Calu3 (cell line): ENCODE measurements at regions of chr10 and their contacts with region 1.

Region 1: DNA sequence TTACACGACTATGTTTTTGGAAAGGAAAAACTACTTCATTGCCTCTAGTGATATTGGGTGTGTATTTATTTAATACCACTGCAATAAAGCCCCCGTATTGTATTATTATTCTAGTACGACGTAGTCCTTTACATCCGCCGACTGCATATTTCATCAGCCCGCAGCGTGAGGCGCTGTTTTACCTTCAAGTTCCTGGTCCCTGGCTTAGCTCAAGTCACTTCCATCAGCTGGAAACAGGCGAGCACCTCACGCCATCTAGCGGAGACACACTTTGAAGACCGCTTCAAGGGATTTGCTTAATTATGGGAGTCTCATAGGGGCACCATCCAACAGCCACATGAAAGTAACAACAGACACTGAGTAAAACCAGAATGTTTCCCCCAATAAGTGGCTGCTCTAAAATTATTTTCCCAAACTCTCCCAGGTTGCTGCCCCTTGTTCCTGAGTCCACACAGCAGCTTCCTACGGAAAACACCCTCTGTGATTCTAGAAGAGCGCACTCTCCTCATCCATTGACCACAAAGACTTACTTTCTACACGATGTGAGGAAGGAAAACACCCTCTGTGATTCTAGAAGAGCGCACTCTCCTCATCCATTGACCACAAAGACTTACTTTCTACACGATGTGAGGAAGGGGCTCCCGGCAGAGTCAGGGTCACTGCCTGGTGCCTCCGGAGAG is 15.7 kb upstream of the ITIH2 start:
- DNase-seq: peak; percentile 85
- H3K4me3 Mint-ChIP-seq: peak overlapping the region; percentile 50
- H3K27ac Mint-ChIP-seq: peak overlapping the region; percentile 80
- H3K4me1 Mint-ChIP-seq: peaks cover 27% of the 10 kb centered on the region
- H3K27me3 Mint-ChIP-seq: no peaks in the 10 kb centered on the region
- CTCF ChIP-seq: peak; percentile 87

Region 2: DNA sequence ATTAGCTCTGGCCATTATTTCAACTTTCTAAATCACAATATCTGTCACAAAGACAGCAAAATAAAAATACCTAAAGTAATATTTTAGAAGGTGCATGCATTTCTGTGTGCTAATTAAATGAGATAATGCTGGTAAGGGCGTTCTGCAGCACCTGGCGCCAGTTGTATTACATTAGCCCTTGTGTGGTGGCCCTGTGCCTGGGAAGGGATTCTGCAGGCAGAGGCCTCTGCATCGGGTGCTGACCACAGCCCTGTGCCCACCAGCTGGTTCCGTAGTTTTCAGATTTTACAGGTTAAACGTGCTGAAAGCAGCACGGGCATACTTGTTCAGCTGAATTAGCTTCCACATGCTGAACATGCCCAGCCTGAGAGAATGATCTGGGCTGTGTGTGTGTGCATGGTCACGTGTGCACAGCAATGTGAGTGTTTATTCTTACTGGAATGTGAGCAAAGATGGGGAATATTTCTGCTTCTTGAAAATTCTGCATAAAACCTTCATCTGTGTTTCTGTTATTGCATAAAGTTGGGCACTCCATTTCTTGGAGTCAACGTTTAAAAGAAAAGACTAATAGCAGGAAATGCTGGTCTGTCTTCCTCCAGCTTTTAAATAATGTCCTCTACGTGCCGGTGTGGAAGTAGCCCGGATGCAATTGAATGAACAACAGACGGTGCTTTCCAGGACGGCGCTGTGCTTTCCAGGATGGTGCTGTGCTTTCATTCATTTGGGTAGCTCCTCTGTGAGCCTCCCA is 949.4 kb before region 1 on chr10:
- CTCF ChIA-PET with region 1: no interaction called
- intact Hi-C with region 1: loop called (anchors 5 kb)
- DNase-seq: peak; percentile 39
- H3K4me3 Mint-ChIP-seq: peak overlapping the region; percentile 79
- H3K27ac Mint-ChIP-seq: peak overlapping the region; percentile 74
- H3K4me1 Mint-ChIP-seq: peaks cover 63% of the 10 kb centered on the region
- H3K27me3 Mint-ChIP-seq: no peaks in the 10 kb centered on the region
- CTCF ChIP-seq: no peak

Region 3: DNA sequence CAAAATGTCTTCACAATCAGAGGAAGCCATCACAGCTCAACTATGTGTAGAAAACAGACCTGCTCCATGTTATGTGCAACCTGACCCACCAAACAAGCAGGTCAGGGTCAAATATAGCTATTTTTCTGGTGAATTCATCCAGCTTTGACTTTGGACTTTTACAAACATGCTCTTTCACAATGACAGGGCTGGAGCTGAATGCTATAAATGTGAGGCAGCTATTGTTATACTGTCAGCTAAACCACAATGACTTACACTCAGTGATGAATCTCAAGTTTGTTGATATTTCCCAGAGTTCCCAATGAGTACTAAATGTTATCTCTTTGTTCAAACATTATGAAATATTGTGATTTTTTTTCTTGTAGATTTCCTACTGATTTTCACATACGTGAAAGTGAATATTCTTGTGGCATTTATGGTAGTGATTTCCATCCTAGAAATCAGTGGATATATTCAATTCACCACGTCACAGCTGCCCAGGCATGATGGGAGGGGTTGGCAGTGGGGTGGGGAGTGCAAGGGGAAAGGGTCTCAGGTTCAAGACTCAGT is 13.3 kb after region 1 on chr10:
- CTCF ChIA-PET with region 1: interaction called, 20 read pairs
- intact Hi-C with region 1: no loop called
- DNase-seq: peak; percentile 42
- H3K4me3 Mint-ChIP-seq: no peak overlapping the region
- H3K27ac Mint-ChIP-seq: peak overlapping the region; percentile 54
- H3K4me1 Mint-ChIP-seq: peaks cover 61% of the 10 kb centered on the region
- H3K27me3 Mint-ChIP-seq: no peaks in the 10 kb centered on the region
- CTCF ChIP-seq: no peak

Region 4: GRCh38 chr10:7750222-7750621 is 62.9 kb after region 1 on chr10:
- CTCF ChIA-PET with region 1: no interaction called
- intact Hi-C with region 1: loop called (anchors 5 kb)
- DNase-seq: no peak
- H3K4me3 Mint-ChIP-seq: no peak overlapping the region
- H3K27ac Mint-ChIP-seq: no peak overlapping the region
- H3K4me1 Mint-ChIP-seq: no peaks in the 10 kb centered on the region
- H3K27me3 Mint-ChIP-seq: no peaks in the 10 kb centered on the region
- CTCF ChIP-seq: no peak

Region 5: GRCh38 chr10:7767209-7767608 is 79.8 kb after region 1 on chr10:
- CTCF ChIA-PET with region 1: no interaction called
- intact Hi-C with region 1: no loop called
- DNase-seq: no peak
- H3K4me3 Mint-ChIP-seq: no peak overlapping the region
- H3K27ac Mint-ChIP-seq: no peak overlapping the region
- H3K4me1 Mint-ChIP-seq: no peaks in the 10 kb centered on the region
- H3K27me3 Mint-ChIP-seq: no peaks in the 10 kb centered on the region
- CTCF ChIP-seq: no peak

Region 6: DNA sequence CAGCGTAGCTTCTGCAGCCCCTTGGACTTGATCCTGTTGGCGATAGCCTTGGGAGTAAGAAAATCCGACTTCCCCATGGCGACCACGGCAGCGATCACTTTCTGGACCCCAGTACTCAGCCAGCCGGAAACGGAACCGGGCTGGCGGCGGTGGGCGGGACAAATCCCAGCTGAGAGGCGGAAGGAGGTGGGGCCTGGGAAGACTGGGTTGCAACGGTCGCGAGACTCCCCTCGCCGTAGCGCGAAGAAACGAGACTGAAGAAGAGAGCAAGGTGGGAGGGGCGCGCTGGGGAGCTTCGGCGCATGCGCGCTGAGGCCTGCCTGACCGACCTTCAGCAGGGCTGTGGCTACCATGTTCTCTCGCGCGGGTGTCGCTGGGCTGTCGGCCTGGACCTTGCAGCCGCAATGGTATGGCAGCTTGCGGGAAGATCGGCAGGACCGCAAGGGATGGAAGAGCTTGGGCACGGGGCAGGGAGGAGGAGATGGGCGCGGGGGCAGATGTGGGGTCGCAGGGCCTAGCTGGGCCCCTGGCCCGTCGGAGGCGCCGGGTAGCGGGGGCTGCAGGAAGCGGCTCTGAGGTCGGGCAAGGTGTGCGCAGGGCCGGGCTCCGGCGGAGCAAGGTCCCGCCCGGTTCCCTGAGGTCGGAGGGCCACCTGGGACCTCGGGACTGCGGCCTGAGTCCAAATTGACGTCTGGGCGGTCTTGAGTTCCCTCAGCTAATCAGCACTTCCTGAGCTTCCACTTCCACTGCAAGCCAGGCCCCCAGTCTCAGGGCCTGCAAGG is 100.7 kb after region 1 on chr10 and contains the starts of genes ATP5F1C and KIN:
- CTCF ChIA-PET with region 1: interaction called, 9 read pairs
- intact Hi-C with region 1: loop called (anchors 5 kb)
- DNase-seq: peak; percentile 97
- H3K4me3 Mint-ChIP-seq: no peak within 1 kb of the TSS
- H3K27ac Mint-ChIP-seq: peak within 1 kb of the TSS; percentile 42
- H3K4me1 Mint-ChIP-seq: peaks cover 32% of the 10 kb centered on the region
- H3K27me3 Mint-ChIP-seq: no peaks in the 10 kb centered on the region
- CTCF ChIP-seq: no peak
- total RNA-seq, gene ATP5F1C: 312 and 373 TPM in 2 replicates
- total RNA-seq, gene KIN: 15.0 and 16.2 TPM in 2 replicates

Region 7: GRCh38 chr10:9302120-9302746 is 1614.9 kb after region 1 on chr10:
- CTCF ChIA-PET with region 1: no interaction called
- intact Hi-C with region 1: loop called (anchors 5 kb)
- DNase-seq: peak; percentile 36
- H3K4me3 Mint-ChIP-seq: no peak overlapping the region
- H3K27ac Mint-ChIP-seq: no peak overlapping the region
- H3K4me1 Mint-ChIP-seq: peaks cover 7% of the 10 kb centered on the region
- H3K27me3 Mint-ChIP-seq: peaks cover 34% of the 10 kb centered on the region
- CTCF ChIP-seq: peak; percentile 21